Sigmoid colon (tissue), 7 donors: ENCODE measurements at regions of chr5 and their contacts with region 1.

Region 1: GRCh38 chr5:7391814-7392692 is 3.9 kb upstream of the ADCY2 start:
- DNase-seq: no peak
- H3K4me3 ChIP-seq: no peak overlapping the region
- H3K27ac ChIP-seq: no peak overlapping the region
- H3K4me1 ChIP-seq: peaks cover 0 to 16% (median 7%) of the 10 kb centered on the region in 4 donors
- H3K27me3 ChIP-seq: no peaks in the 10 kb centered on the region
- CTCF ChIP-seq: peak; percentile 34 to 51 (median 50)
- EP300 ChIP-seq: no peak
- POLR2A ChIP-seq: no peak

Region 2: DNA sequence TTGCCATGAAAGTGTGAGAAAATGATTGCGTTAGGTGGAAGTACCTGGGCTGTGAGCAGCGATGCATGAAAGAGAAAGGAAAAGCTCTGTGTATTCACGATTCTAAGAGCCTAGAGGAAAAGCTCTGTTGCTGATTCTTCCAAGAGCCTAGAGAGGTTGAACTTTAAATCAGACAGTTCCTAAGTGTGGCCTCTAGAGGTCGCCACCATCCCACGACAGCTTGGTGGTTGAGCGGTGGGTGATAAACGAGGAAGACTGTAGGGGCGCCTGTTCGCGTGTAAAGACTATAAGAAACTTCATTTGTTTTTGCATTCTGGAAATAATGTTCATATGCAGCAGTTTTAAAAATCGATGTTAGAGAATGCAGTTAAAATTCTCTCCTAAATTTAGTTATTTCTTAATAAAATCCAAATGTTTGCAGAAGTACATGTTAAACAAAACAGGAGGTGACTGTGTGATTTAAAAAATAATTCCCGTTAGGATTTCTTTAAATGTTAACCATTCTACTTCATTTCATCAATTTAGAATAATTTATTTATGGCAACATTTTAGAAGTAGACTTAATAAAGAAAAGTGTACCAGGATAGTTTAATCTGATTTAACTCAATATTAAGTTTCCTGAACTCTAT is 571.1 kb before region 1 on chr5:
- intact Hi-C with region 1: loop called (anchors 1 kb)
- DNase-seq: no peak
- H3K4me3 ChIP-seq: no peak overlapping the region
- H3K27ac ChIP-seq: no peak overlapping the region
- H3K4me1 ChIP-seq: no peaks in the 10 kb centered on the region
- H3K27me3 ChIP-seq: no peaks in the 10 kb centered on the region
- CTCF ChIP-seq: peak; percentile 18 to 61 (median 25)
- EP300 ChIP-seq: no peak
- POLR2A ChIP-seq: no peak

Region 3: GRCh38 chr5:7325975-7326911 is 65.8 kb before region 1 on chr5:
- intact Hi-C with region 1: no loop called
- DNase-seq: no peak
- H3K4me3 ChIP-seq: no peak overlapping the region
- H3K27ac ChIP-seq: no peak overlapping the region
- H3K4me1 ChIP-seq: peaks cover 0 to 8% (median 0%) of the 10 kb centered on the region in 4 donors
- H3K27me3 ChIP-seq: no peaks in the 10 kb centered on the region
- CTCF ChIP-seq: no peak
- EP300 ChIP-seq: no peak
- POLR2A ChIP-seq: no peak

Region 4: DNA sequence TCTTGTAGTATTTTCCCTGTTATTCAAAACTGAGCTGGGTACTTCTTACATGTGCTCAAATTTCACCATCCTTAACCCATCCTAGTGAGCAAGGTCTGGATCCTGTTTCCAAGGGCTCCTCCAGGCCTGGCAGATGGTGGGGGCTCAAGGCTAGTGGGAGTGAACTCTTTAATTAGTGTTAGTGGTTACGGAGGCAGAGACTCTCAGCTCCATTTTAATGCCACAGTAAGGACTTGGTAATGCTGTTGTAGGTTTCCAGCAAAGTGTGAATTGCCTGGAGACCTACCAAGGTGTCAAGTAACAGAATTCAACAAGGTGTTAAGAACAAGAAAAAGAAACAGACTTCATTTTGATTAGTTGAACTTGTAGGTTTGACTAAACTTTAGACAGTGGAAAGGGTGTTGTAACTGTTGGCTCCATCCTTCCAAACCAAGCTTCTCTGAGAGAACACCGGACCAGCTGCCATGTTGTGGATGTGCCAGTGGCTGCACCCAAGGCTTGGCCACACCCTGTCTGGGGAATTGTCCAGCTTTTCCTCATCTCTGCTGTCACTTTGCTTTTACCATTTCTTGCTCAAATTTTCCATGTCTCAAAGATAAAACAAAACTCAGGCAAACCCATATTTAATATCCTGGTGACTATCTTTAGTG is 102.6 kb after region 1 on chr5:
- intact Hi-C with region 1: no loop called
- DNase-seq: no peak
- H3K4me3 ChIP-seq: no peak overlapping the region
- H3K27ac ChIP-seq: no peak overlapping the region
- H3K4me1 ChIP-seq: peaks cover 0 to 4% (median 0%) of the 10 kb centered on the region in 4 donors
- H3K27me3 ChIP-seq: no peaks in the 10 kb centered on the region
- CTCF ChIP-seq: no peak
- EP300 ChIP-seq: no peak
- POLR2A ChIP-seq: no peak

Region 5: GRCh38 chr5:7650755-7651154 is 258.7 kb after region 1 on chr5:
- intact Hi-C with region 1: loop called (anchors 10 kb)
- DNase-seq: peak; percentile 85
- H3K4me3 ChIP-seq: no peak overlapping the region
- H3K27ac ChIP-seq: peak overlapping the region; percentile 47 to 77 (median 60)
- H3K4me1 ChIP-seq: peaks cover 0 to 32% (median 14%) of the 10 kb centered on the region in 4 donors
- H3K27me3 ChIP-seq: no peaks in the 10 kb centered on the region
- CTCF ChIP-seq: no peak
- EP300 ChIP-seq: no peak
- POLR2A ChIP-seq: no peak

Region 6: DNA sequence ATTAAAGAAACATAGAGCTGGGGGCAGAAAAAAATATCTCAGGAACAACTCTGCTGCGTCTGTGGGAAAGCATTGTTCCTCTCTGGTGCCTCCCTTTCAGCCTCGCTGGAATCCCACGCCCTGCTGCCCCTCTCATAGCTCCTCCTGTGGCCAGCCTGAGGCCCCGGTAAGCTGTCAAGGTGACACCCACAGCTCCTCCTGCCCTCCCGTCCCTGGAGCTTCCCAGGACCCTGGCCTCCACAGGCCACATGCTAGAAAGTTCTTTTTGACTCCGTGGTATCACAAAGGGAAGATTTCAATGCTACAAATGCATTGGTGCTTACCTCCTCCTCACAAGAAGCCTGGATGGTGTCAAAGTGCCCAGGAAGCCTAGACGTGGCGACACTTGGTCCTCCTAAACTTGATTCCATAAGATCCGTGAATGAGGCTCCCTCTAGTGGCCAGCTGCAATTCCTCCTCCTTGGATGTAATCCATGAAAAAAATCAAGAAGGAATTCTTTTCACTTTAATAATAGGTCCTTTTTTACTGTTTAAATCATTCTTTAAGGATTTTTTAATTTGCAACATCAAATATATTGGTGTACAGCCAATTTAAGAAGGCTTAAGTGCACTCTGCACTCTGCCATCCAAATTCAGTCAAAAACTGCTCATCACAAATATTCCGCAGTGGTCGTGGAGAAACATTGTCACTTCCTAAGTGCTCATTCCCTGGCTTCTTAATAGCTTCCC is 354.0 kb after region 1 on chr5:
- intact Hi-C with region 1: loop called (anchors 1 kb)
- DNase-seq: peak; percentile 86
- H3K4me3 ChIP-seq: no peak overlapping the region
- H3K27ac ChIP-seq: no peak overlapping the region
- H3K4me1 ChIP-seq: peaks cover 0 to 6% (median 0%) of the 10 kb centered on the region in 4 donors
- H3K27me3 ChIP-seq: no peaks in the 10 kb centered on the region
- CTCF ChIP-seq: peak; percentile 52 to 89 (median 77)
- EP300 ChIP-seq: no peak
- POLR2A ChIP-seq: no peak